Transverse colon (tissue), 4 donors: ENCODE measurements at regions of chr21 and their contacts with region 1.

Region 1: GRCh38 chr21:44574444-44575306 is 1.1 kb downstream of the KRTAP10-4 start:
- DNase-seq: peak; percentile 77
- H3K4me3 ChIP-seq: peak overlapping the region in 2 of 4 donors; percentile 17 to 24
- H3K27ac ChIP-seq: peak overlapping the region in 2 of 4 donors; percentile 11 to 61
- H3K4me1 ChIP-seq: peaks cover 0 to 11% (median 8%) of the 10 kb centered on the region in 4 donors
- H3K27me3 ChIP-seq: peaks cover 4% of the 10 kb centered on the region
- CTCF ChIP-seq: peak in 2 of 5 experiments; percentile 15 to 16
- EP300 ChIP-seq: no peak
- POLR2A ChIP-seq: no peak

Region 2: GRCh38 chr21:44697811-44698734 is 123.4 kb after region 1 on chr21:
- in situ Hi-C with region 1: loop called in 2 of 4 experiments (anchors 25 kb)
- intact Hi-C with region 1: no loop called
- DNase-seq: no peak
- H3K4me3 ChIP-seq: no peak overlapping the region
- H3K27ac ChIP-seq: no peak overlapping the region
- H3K4me1 ChIP-seq: no peaks in the 10 kb centered on the region
- H3K27me3 ChIP-seq: peaks cover 74% of the 10 kb centered on the region
- CTCF ChIP-seq: no peak
- EP300 ChIP-seq: no peak
- POLR2A ChIP-seq: no peak